ENCODE measurements at regions of chr5 and their contacts with region 1.

Region 1: GRCh38 chr5:141524604-141525597 is 36.0 kb downstream of the PCDHGC5 start:
- DNase-seq: peak; percentile 99
- H3K4me3 ChIP-seq: peak overlapping the region; percentile 27
- H3K27ac ChIP-seq: peak overlapping the region; percentile 93
- H3K4me1 ChIP-seq: peaks cover 72% of the 10 kb centered on the region
- H3K27me3 ChIP-seq: no peaks in the 10 kb centered on the region
- CTCF ChIP-seq: peak; percentile 100

Region 2: GRCh38 chr5:141398608-141399007 is 126.3 kb before region 1 on chr5:
- CTCF ChIA-PET with region 1: no interaction called
- POLR2A ChIA-PET with region 1: no interaction called
- intact Hi-C with region 1: loop called (anchors 5 kb)
- DNase-seq: no peak
- H3K4me3 ChIP-seq: no peak overlapping the region
- H3K27ac ChIP-seq: no peak overlapping the region
- H3K4me1 ChIP-seq: no peaks in the 10 kb centered on the region
- H3K27me3 ChIP-seq: no peaks in the 10 kb centered on the region
- CTCF ChIP-seq: no peak

Region 3: DNA sequence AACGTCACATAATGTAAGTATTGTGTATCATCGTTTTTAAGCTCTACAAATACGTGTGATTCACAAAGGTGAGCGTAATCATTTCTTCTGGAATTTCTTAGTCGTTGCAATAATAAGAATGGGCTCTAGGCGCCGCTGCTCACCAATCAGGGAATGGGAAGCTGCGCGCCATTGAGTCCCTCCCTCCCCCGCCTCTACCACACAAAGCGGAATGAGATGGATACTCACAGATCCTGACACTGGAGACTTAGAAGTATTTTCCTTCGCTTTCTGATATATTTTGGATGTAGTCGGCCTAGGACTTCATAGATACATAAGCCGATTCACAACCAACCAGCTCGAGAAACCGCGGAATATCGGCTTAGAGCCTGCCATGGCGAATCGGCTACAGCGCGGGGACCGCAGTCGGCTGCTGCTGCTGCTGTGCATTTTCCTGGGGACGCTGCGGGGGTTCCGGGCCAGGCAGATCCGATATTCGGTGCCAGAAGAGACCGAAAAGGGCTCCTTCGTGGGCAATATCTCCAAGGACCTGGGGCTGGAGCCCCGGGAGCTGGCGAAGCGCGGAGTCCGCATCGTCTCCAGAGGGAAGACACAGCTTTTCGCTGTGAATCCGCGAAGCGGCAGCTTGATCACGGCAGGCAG is 103.9 kb before region 1 on chr5 and contains the start of gene PCDHGA11:
- CTCF ChIA-PET with region 1: interaction called, 7 read pairs
- POLR2A ChIA-PET with region 1: no interaction called
- intact Hi-C with region 1: loop called (anchors 1 kb)
- DNase-seq: peak; percentile 85
- H3K4me3 ChIP-seq: peak within 1 kb of the TSS; percentile 53
- H3K27ac ChIP-seq: peak within 1 kb of the TSS; percentile 77
- H3K4me1 ChIP-seq: no peaks in the 10 kb centered on the region
- H3K27me3 ChIP-seq: no peaks in the 10 kb centered on the region
- CTCF ChIP-seq: peak; percentile 69
- total RNA-seq, gene PCDHGA11: 34.9 and 35.5 TPM in 2 replicates

Region 4: GRCh38 chr5:141475625-141476131 is 49.2 kb before region 1 on chr5 and contains the start of gene PCDHGC3:
- CTCF ChIA-PET with region 1: interaction called, 5 read pairs
- POLR2A ChIA-PET with region 1: no interaction called
- intact Hi-C with region 1: loop called (anchors 1 kb)
- DNase-seq: peak; percentile 98
- H3K4me3 ChIP-seq: peak within 1 kb of the TSS; percentile 80
- H3K27ac ChIP-seq: peak within 1 kb of the TSS; percentile 89
- H3K4me1 ChIP-seq: peaks cover 35% of the 10 kb centered on the region
- H3K27me3 ChIP-seq: no peaks in the 10 kb centered on the region
- CTCF ChIP-seq: peak; percentile 55
- total RNA-seq, gene PCDHGC3: 103 and 112 TPM in 2 replicates

Region 5: DNA sequence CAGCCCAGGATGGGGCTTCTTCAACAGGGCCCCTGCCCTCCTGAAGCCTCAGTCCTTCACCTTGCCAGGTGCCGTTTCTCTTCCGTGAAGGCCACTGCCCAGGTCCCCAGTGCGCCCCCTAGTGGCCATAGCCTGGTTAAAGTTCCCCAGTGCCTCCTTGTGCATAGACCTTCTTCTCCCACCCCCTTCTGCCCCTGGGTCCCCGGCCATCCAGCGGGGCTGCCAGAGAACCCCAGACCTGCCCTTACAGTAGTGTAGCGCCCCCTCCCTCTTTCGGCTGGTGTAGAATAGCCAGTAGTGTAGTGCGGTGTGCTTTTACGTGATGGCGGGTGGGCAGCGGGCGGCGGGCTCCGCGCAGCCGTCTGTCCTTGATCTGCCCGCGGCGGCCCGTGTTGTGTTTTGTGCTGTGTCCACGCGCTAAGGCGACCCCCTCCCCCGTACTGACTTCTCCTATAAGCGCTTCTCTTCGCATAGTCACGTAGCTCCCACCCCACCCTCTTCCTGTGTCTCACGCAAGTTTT is 12.5 kb before region 1 on chr5:
- CTCF ChIA-PET with region 1: interaction called, 11 read pairs
- POLR2A ChIA-PET with region 1: interaction called, 3 read pairs
- intact Hi-C with region 1: loop called (anchors 1 kb)
- DNase-seq: peak; percentile 87
- H3K4me3 ChIP-seq: peak overlapping the region; percentile 57
- H3K27ac ChIP-seq: peak overlapping the region; percentile 92
- H3K4me1 ChIP-seq: peaks cover 56% of the 10 kb centered on the region
- H3K27me3 ChIP-seq: no peaks in the 10 kb centered on the region
- CTCF ChIP-seq: peak; percentile 96

Region 6: DNA sequence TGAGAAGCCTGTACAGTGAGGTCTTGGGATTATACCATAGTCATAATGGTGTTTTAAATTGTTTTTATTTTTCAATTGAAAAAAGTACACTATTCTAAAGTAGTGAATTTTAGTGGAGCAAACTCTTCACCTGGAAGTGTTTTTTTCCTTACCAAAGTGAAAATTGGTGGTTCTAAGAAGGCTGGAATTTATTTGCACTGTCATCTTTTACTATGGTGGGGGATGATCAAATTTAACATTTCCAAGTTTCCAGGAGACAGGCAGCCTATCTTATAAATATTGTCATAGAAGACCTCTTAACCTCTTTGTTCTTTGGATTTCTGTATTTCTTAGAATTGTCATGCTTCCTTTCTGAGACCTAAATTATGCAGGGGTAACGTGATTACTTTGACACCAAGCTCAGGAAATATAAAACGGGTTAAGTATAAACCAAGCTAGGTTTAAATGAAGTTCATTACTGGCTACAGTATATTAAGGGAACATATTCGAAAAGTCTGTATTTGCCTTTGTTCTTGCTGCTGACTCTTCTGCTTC is 603.8 kb after region 1 on chr5:
- CTCF ChIA-PET with region 1: no interaction called
- POLR2A ChIA-PET with region 1: no interaction called
- intact Hi-C with region 1: no loop called
- DNase-seq: peak; percentile 19
- H3K4me3 ChIP-seq: no peak overlapping the region
- H3K27ac ChIP-seq: peak overlapping the region; percentile 14
- H3K4me1 ChIP-seq: peaks cover 14% of the 10 kb centered on the region
- H3K27me3 ChIP-seq: no peaks in the 10 kb centered on the region
- CTCF ChIP-seq: no peak